Cardiac septum (tissue), 1 donor: ENCODE measurements at regions of chr5 and their contacts with region 1.

Region 1: DNA sequence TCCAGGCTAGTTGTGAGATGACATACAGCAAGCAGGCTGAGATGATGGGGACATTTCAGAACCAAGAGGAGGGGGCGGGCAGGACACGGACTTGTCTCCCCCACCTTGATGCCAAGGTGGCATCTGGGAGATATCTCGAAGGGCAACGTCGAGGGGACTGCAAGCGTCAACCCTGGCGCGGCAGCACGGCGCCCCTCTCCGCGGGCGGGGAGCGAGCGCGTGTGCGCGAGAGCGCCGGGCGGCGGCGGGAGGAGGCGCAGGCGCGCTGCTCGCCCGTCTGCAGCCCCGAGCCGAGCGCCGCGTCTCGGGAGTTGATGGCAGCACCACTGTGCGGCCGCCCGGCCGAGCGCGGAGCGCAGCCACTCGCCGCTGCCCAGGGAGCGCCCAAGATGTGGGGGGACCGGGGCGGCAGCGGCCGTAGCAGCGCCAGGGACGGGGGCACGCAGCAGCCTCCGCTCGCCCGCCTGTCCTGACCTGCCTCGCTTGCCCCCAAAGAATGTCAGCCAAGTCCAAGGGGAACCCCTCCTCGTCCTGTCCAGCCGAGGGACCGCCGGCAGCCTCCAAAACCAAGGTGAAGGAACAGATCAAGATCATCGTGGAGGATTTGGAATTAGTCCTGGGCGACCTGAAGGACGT is at the start of gene PRR16:
- DNase-seq: peak; percentile 77
- total RNA-seq, gene PRR16: 18.1 TPM

Region 2: DNA sequence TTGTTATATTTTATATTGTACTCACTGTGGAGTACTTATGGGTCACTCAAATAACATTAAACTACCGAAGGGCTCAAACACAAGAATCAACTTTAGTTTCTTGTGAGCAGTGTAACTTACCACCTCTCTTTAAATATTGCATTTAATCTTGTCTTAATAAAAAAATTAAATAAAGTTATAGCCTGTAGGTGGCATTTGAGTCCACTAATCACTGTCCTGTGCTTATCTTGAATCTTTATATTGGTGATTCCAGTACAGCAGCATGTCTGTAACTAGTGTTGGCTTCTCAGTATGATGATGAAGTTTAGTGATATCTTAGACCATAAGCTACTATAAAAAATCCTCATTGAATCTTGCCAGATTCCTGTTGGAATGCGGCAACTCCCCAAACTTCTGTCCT is 521.0 kb before region 1 on chr5:
- intact Hi-C with region 1: loop called (anchors 5 kb)
- DNase-seq: no peak

Region 3: GRCh38 chr5:120052916-120053828 is 410.9 kb before region 1 on chr5:
- intact Hi-C with region 1: loop called (anchors 2 kb)
- DNase-seq: no peak

Region 4: GRCh38 chr5:120430572-120430971 is 33.5 kb before region 1 on chr5:
- intact Hi-C with region 1: no loop called
- DNase-seq: no peak

Region 5: DNA sequence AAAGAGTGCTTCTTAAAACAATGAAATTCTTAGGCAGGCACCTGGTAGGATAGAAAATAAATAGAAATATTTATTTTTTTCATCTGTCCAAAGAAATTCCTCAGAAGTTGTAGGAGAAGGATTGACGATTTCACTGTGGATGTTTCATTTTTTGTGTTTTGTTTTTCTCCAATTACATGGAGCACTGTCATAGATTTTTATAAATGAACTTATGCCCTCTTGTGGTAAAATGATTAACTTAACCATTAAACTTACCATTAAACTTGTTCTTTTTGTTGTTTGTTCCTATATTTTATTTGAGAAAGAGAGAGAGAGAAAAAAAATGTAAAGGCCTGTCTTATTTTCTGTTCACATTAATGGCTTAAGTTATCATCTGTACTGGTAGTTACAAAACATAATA is 339.2 kb after region 1 on chr5:
- intact Hi-C with region 1: loop called (anchors 10 kb)
- DNase-seq: no peak